ENCODE measurements at regions of chr10 and their contacts with region 1.

Region 1: DNA sequence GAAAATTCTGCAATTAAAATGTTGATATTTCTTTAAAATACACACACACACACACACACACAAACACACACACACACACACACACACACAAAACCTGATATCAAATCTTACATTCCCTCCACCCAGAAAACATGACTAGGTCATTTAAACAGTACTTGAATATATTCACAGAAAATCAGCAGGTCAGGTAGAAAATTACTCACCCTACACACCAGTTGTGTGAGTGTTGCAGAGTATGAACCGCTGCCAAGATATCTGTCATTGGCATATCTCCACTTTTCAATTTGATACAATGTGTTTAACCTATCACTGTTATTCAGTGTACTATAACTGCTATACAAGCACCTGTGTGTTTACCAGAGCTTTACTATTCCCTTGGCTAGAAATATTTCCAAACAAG is 283.6 kb upstream of the LRRTM3 start:
- DNase-seq: no peak

Region 2: DNA sequence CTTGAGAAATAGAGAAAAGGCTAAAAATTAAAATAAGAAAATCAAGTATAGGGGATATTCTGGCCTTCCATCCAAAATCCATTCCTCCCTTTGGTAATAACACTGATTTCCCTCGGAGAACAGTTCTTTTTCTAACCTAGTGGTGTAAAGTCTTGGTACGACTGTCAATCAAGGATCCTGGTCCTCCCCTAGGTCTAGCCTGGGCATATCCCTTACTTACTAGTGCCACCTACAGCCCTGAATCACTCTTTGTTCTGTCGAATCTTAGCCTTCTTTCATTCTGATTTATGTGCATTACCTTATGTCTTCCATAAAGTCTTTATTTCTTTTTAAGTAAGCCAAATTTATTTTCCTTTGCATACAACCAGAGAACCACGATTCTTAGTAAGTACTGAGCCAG is 15.1 kb before region 1 on chr10:
- intact Hi-C with region 1: no loop called
- DNase-seq: no peak

Region 3: GRCh38 chr10:66654861-66655260 is 12.6 kb after region 1 on chr10:
- intact Hi-C with region 1: loop called (anchors 2 kb)
- DNase-seq: no peak

Region 4: DNA sequence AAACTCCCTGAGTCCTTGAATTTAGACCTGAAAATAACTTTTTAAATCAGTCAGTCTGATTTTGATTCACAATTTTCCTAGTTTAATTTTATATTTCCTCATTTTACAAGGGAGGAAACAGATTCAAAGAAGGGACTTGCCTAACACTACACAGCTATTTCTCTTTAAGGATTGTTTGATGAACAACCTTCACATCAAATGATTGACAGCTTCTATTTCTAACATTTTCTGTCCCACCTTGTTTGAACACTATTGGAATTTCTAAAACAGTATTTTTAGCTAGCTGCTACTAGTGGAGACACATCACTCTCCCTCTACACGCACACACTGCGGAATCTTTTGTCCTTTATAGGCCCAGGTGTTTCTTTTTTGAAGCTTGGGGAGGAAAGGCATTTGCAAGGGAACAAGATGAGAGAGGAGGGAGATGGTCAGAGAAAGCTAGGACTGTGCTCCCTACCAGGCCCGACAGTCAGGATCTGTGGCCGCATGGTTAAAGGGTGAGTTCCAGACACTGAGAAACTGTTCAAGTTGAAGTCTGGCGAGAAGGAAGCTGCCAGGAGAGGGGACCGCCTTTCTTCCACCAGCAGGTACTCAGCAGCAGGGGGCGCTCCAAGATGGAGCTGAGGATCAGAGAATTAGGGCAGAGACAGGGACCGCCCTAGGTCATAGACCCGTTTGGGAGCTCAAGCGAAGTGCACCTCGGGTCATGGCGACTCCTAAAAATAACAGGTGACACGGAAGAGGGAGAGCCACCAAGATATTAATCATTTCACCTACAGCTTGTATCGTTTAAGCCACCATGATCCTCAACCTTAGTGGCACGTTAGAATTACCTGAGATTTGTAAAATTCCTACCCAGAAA is 1146.0 kb after region 1 on chr10:
- intact Hi-C with region 1: no loop called
- DNase-seq: peak in 5 of 10 donors; percentile 12 to 82 (median 49)

Measured in posterior cingulate gyrus (tissue), 11 donors.